Adrenal gland (tissue), 19 donors: ENCODE measurements at regions of chr7 and their contacts with region 1.

Region 1: GRCh38 chr7:4641667-4642467 is 40.2 kb upstream of the FOXK1 start:
- DNase-seq: peak; percentile 93 to 98 (median 96)
- H3K4me3 ChIP-seq: peak overlapping the region in 3 of 4 donors; percentile 31 to 71 (median 68)
- H3K27ac ChIP-seq: peak overlapping the region; percentile 39 to 89 (median 74)
- H3K4me1 ChIP-seq: no peaks in the 10 kb centered on the region
- H3K27me3 ChIP-seq: no peaks in the 10 kb centered on the region
- CTCF ChIP-seq: peak in 5 of 6 experiments; percentile 12 to 71 (median 55)
- POLR2A ChIP-seq: peak; percentile 73 to 92

Region 2: GRCh38 chr7:4428526-4428925 is 213.3 kb before region 1 on chr7:
- intact Hi-C with region 1: no loop called
- DNase-seq: no peak
- H3K4me3 ChIP-seq: no peak overlapping the region
- H3K27ac ChIP-seq: no peak overlapping the region
- H3K4me1 ChIP-seq: no peaks in the 10 kb centered on the region
- H3K27me3 ChIP-seq: no peaks in the 10 kb centered on the region
- CTCF ChIP-seq: no peak
- POLR2A ChIP-seq: no peak

Region 3: GRCh38 chr7:4665661-4666060 is 23.8 kb after region 1 on chr7:
- intact Hi-C with region 1: no loop called
- DNase-seq: no peak
- H3K4me3 ChIP-seq: no peak overlapping the region
- H3K27ac ChIP-seq: peak overlapping the region in 2 of 5 donors; percentile 11 to 13
- H3K4me1 ChIP-seq: no peaks in the 10 kb centered on the region
- H3K27me3 ChIP-seq: no peaks in the 10 kb centered on the region
- CTCF ChIP-seq: no peak
- POLR2A ChIP-seq: no peak

Region 4: GRCh38 chr7:4744391-4745264 is 102.8 kb after region 1 on chr7:
- intact Hi-C with region 1: loop called in 1 of 2 experiments (anchors 5 kb)
- DNase-seq: peak; percentile 98 to 100 (median 99)
- H3K4me3 ChIP-seq: peak overlapping the region in 1 of 4 donors; percentile 34
- H3K27ac ChIP-seq: peak overlapping the region; percentile 27 to 92 (median 88)
- H3K4me1 ChIP-seq: peaks cover 24 to 54% of the 10 kb centered on the region in 2 donors
- H3K27me3 ChIP-seq: no peaks in the 10 kb centered on the region
- CTCF ChIP-seq: no peak
- POLR2A ChIP-seq: peak in 1 of 2 donors; percentile 82